ENCODE measurements at regions of chr12 and their contacts with region 1.

Region 1: GRCh38 chr12:6873094-6874014 is at the start of gene SPSB2:
- DNase-seq: peak; percentile 99
- ATAC-seq: peak; percentile 78
- H3K4me3 Mint-ChIP-seq: peak within 1 kb of the TSS; percentile 94
- H3K27ac Mint-ChIP-seq: peak within 1 kb of the TSS; percentile 96
- H3K4me1 Mint-ChIP-seq: peaks cover 56% of the 10 kb centered on the region
- H3K27me3 Mint-ChIP-seq: no peaks in the 10 kb centered on the region
- total RNA-seq, gene SPSB2: 10.0 to 11.2 TPM

Region 2: GRCh38 chr12:6833189-6833890 is 40.0 kb before region 1 on chr12:
- CTCF ChIA-PET with region 1: interaction called, 14 read pairs
- POLR2A ChIA-PET with region 1: interaction called, 3 read pairs
- DNase-seq: no peak
- ATAC-seq: no peak
- H3K4me3 Mint-ChIP-seq: no peak overlapping the region
- H3K27ac Mint-ChIP-seq: no peak overlapping the region
- H3K4me1 Mint-ChIP-seq: peaks cover 12% of the 10 kb centered on the region
- H3K27me3 Mint-ChIP-seq: peaks cover 28% of the 10 kb centered on the region

Region 3: DNA sequence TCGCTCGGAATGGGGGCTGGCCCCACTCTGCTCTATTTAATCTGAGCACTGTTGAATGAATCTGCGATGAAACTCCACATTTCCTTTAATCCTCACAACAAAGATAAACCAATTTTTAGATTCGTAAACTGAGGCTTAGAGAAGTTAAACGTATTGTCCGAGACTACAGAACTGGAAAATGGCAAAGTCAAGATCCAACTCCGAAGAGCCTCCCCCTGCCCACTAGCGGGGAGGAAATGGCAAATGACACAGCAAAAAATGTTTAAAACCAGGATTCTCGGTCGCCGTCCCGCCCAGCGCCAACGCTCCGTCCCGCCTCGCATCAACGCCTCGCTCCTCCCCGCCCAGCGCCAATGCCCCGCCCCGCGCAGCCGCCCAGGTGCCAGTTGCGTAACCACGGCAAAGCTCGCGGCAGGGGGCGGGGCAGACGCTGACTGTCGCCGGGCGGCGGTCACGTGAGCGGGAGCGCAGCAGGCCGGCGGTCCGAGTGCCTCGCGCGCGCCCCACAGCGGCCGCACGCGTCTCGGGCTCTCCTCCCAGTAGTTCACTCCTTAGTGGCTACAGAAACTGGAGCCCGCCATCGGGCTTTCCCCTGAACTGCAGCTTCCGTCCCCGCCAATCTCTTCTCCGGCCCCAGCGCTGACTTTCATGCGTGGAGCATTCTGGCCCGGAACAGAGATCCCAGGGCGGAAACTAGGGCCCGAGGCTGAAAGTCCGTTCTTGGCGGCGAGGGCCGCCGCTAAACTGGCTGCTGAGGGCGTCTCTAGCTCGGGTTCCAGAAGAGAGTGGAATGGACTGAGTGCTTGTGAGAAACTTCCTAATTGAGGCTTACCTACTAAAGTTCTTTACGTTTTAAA is 17.7 kb after region 1 on chr12:
- CTCF ChIA-PET with region 1: interaction called, 94 read pairs
- POLR2A ChIA-PET with region 1: interaction called, 40 read pairs
- DNase-seq: peak; percentile 99
- ATAC-seq: peak; percentile 97
- H3K4me3 Mint-ChIP-seq: peak overlapping the region; percentile 82
- H3K27ac Mint-ChIP-seq: peak overlapping the region; percentile 95
- H3K4me1 Mint-ChIP-seq: peaks cover 29% of the 10 kb centered on the region
- H3K27me3 Mint-ChIP-seq: no peaks in the 10 kb centered on the region

Region 4: GRCh38 chr12:6927379-6928024 is 54.1 kb after region 1 on chr12 and contains the start of gene ATN1:
- CTCF ChIA-PET with region 1: interaction called, 25 read pairs
- POLR2A ChIA-PET with region 1: interaction called, 17 read pairs
- DNase-seq: peak; percentile 51
- ATAC-seq: peak; percentile 34
- H3K4me3 Mint-ChIP-seq: peak within 1 kb of the TSS; percentile 78
- H3K27ac Mint-ChIP-seq: peak within 1 kb of the TSS; percentile 53
- H3K4me1 Mint-ChIP-seq: peaks cover 68% of the 10 kb centered on the region
- H3K27me3 Mint-ChIP-seq: no peaks in the 10 kb centered on the region
- total RNA-seq, gene ATN1: 21.6 to 24.5 TPM

Region 5: GRCh38 chr12:6965026-6965661 is 91.8 kb after region 1 on chr12:
- CTCF ChIA-PET with region 1: interaction called, 11 read pairs
- POLR2A ChIA-PET with region 1: interaction called, 5 read pairs
- DNase-seq: peak; percentile 93
- ATAC-seq: peak; percentile 65
- H3K4me3 Mint-ChIP-seq: peak overlapping the region; percentile 12
- H3K27ac Mint-ChIP-seq: peak overlapping the region; percentile 77
- H3K4me1 Mint-ChIP-seq: peaks cover 75% of the 10 kb centered on the region
- H3K27me3 Mint-ChIP-seq: no peaks in the 10 kb centered on the region

Measured in activated CD8-positive, alpha-beta T cell treated with anti-CD3 and anti-CD28 coated beads, Interleukin-2, amount 10 ng/mL, durations not matched to agents 7 days and 5 days (primary cell).